ENCODE measurements at regions of chr5 and their contacts with region 1.

Region 1: GRCh38 chr5:17774751-17775150 is 140.5 kb downstream of the TAF11L14 start:
- DNase-seq: no peak
- ATAC-seq: no peak
- H3K4me3 ChIP-seq: no peak overlapping the region
- H3K27ac ChIP-seq: no peak overlapping the region
- H3K4me1 ChIP-seq: no peaks in the 10 kb centered on the region
- H3K27me3 ChIP-seq: no peaks in the 10 kb centered on the region
- CTCF ChIP-seq: no peak

Region 2: GRCh38 chr5:17785774-17786173 is 11.0 kb after region 1 on chr5:
- CTCF ChIA-PET with region 1: no interaction called
- POLR2A ChIA-PET with region 1: interaction called, 13 read pairs
- in situ Hi-C with region 1: no loop called
- intact Hi-C with region 1: no loop called
- DNase-seq: no peak
- ATAC-seq: no peak
- H3K4me3 ChIP-seq: no peak overlapping the region
- H3K27ac ChIP-seq: no peak overlapping the region
- H3K4me1 ChIP-seq: no peaks in the 10 kb centered on the region
- H3K27me3 ChIP-seq: no peaks in the 10 kb centered on the region
- CTCF ChIP-seq: no peak

Region 3: DNA sequence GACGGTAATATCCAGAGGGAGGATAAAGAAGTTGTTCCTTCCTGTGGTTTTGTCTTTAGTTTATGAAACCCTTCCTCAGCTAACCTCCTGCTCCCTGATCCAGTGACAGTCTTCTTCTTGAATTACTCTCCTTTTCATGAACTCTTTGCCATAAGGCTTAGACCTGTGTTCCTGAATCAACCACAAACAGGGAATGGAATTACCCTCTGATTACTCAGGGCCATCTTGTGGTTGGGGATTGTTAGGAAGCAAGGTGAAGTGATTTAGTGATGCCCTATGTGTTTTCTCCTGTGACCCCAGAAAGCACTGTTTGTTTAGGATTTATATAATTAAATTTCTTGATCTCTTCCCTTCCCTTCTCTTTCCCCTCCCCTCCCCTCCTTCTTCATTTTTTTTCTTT is 268.6 kb after region 1 on chr5:
- CTCF ChIA-PET with region 1: no interaction called
- POLR2A ChIA-PET with region 1: interaction called, 19 read pairs
- in situ Hi-C with region 1: no loop called
- intact Hi-C with region 1: no loop called
- DNase-seq: no peak
- ATAC-seq: no peak
- H3K4me3 ChIP-seq: no peak overlapping the region
- H3K27ac ChIP-seq: no peak overlapping the region
- H3K4me1 ChIP-seq: no peaks in the 10 kb centered on the region
- H3K27me3 ChIP-seq: no peaks in the 10 kb centered on the region
- CTCF ChIP-seq: no peak; the same call in 1 of the 2 replicates

Measured in Panc1 (cell line).